Calu3 (cell line): ENCODE measurements at regions of chr1 and their contacts with region 1.

Region 1: GRCh38 chr1:12477936-12478611 is 139.9 kb downstream of the DHRS3 start:
- DNase-seq: peak; percentile 91
- H3K4me3 Mint-ChIP-seq: peak overlapping the region; percentile 49
- H3K27ac Mint-ChIP-seq: peak overlapping the region; percentile 99
- H3K4me1 Mint-ChIP-seq: peaks cover 42% of the 10 kb centered on the region
- H3K27me3 Mint-ChIP-seq: no peaks in the 10 kb centered on the region
- CTCF ChIP-seq: no peak

Region 2: GRCh38 chr1:12386130-12386529 is 91.9 kb before region 1 on chr1:
- CTCF ChIA-PET with region 1: no interaction called
- intact Hi-C with region 1: loop called (anchors 2 kb)
- DNase-seq: peak; percentile 48
- H3K4me3 Mint-ChIP-seq: peak overlapping the region; percentile 18
- H3K27ac Mint-ChIP-seq: peak overlapping the region; percentile 87
- H3K4me1 Mint-ChIP-seq: peaks cover 55% of the 10 kb centered on the region
- H3K27me3 Mint-ChIP-seq: no peaks in the 10 kb centered on the region
- CTCF ChIP-seq: no peak

Region 3: GRCh38 chr1:12454406-12455391 is 23.4 kb before region 1 on chr1:
- CTCF ChIA-PET with region 1: no interaction called
- intact Hi-C with region 1: loop called (anchors 1 kb)
- DNase-seq: peak; percentile 50
- H3K4me3 Mint-ChIP-seq: no peak overlapping the region
- H3K27ac Mint-ChIP-seq: peak overlapping the region; percentile 83
- H3K4me1 Mint-ChIP-seq: peaks cover 39% of the 10 kb centered on the region
- H3K27me3 Mint-ChIP-seq: no peaks in the 10 kb centered on the region
- CTCF ChIP-seq: no peak

Region 4: DNA sequence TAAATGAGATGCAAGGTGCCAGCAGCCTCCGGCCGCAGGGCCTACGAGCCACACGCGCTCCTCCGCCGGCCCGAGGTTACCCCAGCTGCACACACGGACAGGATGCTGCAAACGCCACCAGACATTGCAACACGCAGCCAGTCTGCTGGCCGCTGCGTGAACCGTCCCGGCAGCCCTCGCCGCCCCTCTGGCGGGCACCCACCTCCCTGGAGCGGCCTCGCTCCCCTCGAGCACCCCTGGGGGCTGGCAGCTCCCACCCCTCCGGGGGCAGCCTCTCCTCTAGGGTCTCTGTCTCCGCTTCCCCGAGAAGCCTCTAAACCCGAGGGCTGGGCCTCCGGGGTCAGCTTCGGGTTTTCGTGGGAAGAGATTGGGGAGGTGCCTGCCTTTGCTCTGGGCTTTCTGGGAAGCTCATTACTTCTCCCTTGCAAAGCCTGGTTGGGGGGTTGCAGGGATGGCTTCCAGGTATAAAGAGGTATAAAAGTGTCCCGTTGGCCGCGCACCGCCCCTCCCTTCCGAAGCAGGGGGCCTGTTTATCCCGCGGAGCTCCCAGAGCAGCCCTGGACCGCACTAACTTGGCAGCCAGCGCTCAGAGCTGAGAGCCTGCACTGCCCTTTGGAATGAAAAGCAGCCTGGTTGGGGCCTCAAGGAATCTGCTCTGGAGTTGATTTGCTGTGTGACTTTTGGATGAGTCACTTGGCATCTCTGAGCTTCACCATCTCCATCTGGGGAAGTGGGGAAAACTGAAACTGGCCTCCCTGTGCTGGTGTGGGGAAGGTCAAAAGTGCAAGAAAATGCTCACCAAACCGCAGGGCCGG is 118.1 kb after region 1 on chr1:
- CTCF ChIA-PET with region 1: interaction called, 3 read pairs
- intact Hi-C with region 1: loop called (anchors 5 kb)
- DNase-seq: peak; percentile 64
- H3K4me3 Mint-ChIP-seq: peak overlapping the region; percentile 59
- H3K27ac Mint-ChIP-seq: peak overlapping the region; percentile 95
- H3K4me1 Mint-ChIP-seq: peaks cover 73% of the 10 kb centered on the region
- H3K27me3 Mint-ChIP-seq: no peaks in the 10 kb centered on the region
- CTCF ChIP-seq: no peak

Region 5: GRCh38 chr1:12658531-12659453 is 180.7 kb after region 1 on chr1:
- CTCF ChIA-PET with region 1: interaction called, 3 read pairs
- intact Hi-C with region 1: loop called (anchors 1 kb)
- DNase-seq: peak; percentile 80
- H3K4me3 Mint-ChIP-seq: no peak overlapping the region
- H3K27ac Mint-ChIP-seq: no peak overlapping the region
- H3K4me1 Mint-ChIP-seq: peaks cover 7% of the 10 kb centered on the region
- H3K27me3 Mint-ChIP-seq: peaks cover 9% of the 10 kb centered on the region
- CTCF ChIP-seq: peak; percentile 84